ENCODE measurements at regions of chr12 and their contacts with region 1.

Region 1: DNA sequence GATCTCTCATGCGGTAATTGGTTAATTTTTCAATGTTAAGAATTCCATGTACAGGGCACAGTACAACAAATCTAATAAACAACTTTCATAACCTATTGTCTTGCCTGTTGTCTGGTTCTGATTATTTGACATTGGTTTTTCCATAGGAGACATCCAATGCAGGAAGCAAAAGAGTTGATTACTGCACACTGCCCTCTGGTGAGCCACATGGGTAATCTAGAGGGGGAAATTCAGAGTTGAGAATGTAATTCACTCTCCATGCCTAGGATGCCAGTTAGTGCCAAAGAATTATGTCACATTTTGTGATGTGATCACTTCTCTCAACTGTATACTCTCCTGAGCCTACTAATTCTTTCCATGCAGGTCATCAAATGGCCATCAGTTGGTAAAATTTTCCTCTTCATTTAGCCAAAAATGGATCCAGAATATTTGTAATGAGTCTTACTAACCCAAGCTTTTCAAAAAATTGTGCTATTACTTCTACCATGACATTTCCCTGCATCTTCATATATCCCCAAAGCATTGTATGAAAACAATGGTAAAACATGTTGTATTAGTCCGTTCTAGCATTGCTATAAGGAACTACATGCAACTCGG is 17.7 kb upstream of the CCDC91 start:
- DNase-seq: no peak
- H3K4me3 Mint-ChIP-seq: no peak overlapping the region
- H3K27ac Mint-ChIP-seq: no peak overlapping the region
- H3K4me1 Mint-ChIP-seq: peaks cover 6% of the 10 kb centered on the region
- H3K27me3 Mint-ChIP-seq: no peaks in the 10 kb centered on the region

Region 2: DNA sequence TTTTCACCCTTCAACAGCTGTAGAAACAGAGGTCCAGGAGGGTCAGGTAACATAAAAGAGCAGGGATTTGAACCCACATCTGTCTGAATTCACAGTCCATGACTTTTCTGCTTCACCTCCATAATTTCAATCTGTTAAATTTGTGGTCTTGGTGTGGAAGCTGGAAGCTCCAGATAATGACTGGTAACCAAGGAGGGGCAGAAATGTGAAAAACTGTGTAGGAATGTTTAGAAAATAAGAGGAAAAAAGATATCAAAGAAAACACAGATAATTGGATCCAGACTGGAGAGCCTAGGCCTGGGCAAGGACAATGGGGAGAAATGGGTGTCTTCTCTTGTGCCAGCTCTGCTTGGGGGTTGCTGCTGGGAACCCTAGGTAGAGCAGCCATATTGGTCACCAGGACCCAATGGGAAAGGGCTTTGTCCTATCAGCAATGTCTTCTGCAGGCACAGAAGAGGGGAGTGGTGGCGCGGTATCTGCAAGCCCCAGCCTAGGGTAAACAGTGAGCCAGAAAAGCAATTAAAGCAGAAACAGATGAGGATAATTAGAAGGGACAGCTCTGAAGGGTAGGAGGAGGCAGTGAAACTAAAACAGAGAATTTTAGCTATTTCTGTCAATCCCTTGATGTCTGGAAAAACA is 36.6 kb before region 1 on chr12:
- CTCF ChIA-PET with region 1: no interaction called
- POLR2A ChIA-PET with region 1: no interaction called
- intact Hi-C with region 1: loop called (anchors 5 kb)
- DNase-seq: no peak
- H3K4me3 Mint-ChIP-seq: no peak overlapping the region
- H3K27ac Mint-ChIP-seq: no peak overlapping the region
- H3K4me1 Mint-ChIP-seq: peaks cover 9% of the 10 kb centered on the region
- H3K27me3 Mint-ChIP-seq: peaks cover 1% of the 10 kb centered on the region

Region 3: DNA sequence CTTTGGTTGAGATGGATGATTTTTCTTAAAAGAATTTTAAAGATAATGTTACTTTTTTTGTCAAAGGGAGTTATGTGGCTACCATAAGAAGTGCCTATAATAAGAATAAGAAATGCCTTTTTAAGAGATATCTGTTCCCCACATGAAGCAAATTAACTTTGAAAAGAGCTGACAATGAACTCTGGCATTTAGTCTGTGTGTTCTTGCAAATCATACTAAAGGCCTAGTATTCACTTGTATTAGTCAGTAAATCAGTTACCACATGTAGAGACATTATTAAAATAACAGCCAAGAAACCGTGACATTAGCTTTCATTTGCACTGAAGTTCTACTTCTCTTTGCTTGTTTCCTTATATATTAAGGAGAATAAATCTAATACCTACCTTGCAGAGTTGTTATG is 314.0 kb after region 1 on chr12:
- CTCF ChIA-PET with region 1: no interaction called
- POLR2A ChIA-PET with region 1: no interaction called
- intact Hi-C with region 1: no loop called
- DNase-seq: no peak
- H3K4me3 Mint-ChIP-seq: no peak overlapping the region
- H3K27ac Mint-ChIP-seq: no peak overlapping the region
- H3K4me1 Mint-ChIP-seq: no peaks in the 10 kb centered on the region
- H3K27me3 Mint-ChIP-seq: no peaks in the 10 kb centered on the region

Region 4: DNA sequence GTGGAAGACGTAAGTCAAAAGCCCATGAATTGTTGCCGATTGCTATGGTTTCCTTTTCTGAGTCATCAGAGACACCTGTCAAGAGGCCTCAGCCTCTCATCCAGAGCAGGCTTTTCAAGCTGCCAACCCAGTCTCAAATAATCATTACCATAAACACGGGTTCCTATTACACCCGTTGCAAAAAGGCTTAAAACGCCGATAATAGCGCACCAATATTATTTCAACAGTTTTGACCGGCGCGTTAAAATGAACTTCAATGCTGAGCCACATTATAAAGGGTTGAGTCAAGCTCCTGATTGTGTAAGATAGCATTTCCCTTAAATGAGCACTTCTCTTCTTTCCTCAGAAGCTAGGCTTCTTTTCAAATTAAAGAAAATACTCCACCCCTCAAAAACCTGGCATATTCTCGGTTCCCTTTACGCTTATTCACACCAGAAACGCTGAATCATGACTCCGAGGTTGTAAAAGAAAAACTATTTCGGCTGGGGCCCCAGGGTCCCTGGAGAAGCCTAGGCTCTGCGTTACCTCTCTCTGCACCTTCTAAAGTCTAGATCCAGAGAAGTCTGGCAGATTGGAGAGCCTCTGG is 1609.8 kb after region 1 on chr12:
- CTCF ChIA-PET with region 1: no interaction called
- POLR2A ChIA-PET with region 1: no interaction called
- intact Hi-C with region 1: no loop called
- DNase-seq: peak; percentile 14
- H3K4me3 Mint-ChIP-seq: no peak overlapping the region
- H3K27ac Mint-ChIP-seq: no peak overlapping the region
- H3K4me1 Mint-ChIP-seq: peaks cover 7% of the 10 kb centered on the region
- H3K27me3 Mint-ChIP-seq: peaks cover 41% of the 10 kb centered on the region

Measured in activated CD4-positive, alpha-beta memory T cell treated with anti-CD3 and anti-CD28 coated beads for 36 hours (primary cell).